PC-3 (cell line): ENCODE measurements at regions of chrX and their contacts with region 1.

Region 1: DNA sequence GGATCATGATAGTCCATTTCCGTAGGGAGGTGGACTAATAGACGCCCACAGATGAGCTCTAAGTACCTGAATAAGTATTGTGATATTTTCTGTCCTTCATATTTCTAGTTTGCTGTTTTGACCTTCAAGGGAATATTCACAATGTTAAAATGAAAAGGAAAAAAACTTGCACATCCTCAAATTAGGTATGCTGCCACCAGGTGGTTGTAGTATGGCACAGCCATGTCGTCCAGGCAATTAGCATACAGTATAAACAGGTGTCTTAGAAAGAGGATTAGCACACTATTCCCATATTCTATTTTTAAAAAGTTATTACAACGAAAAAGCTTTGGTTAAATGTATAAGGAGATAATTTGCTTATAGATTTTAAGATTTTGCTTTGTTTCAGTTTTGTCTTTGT is 802.0 kb downstream of the RPA4 start:
- DNase-seq: peak; percentile 62
- ATAC-seq: peak; percentile 57
- H3K4me3 ChIP-seq: no peak overlapping the region
- H3K27ac ChIP-seq: no peak overlapping the region
- H3K4me1 ChIP-seq: no peaks in the 10 kb centered on the region
- H3K27me3 ChIP-seq: no peaks in the 10 kb centered on the region
- CTCF ChIP-seq: peak; percentile 77

Region 2: DNA sequence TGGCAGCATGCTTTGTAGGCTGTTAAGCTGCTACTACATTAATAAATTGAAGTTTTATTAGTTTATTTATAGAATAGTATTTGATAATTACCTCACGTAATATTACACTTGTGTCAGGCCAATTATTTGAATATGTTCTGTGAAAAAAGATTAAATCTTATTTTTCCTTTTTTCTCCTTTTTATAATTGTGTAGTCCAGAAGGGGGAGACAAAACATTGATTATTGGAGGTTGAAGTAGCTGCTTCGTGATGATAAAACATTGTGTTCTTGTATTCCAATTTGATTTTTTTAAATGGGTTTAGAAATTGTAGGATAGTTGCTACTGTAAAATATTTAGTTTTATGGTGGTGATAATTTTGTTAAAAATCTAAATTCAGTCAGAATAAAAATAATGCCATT is 915.4 kb before region 1 on chrX:
- CTCF ChIA-PET with region 1: no interaction called
- POLR2A ChIA-PET with region 1: no interaction called
- intact Hi-C with region 1: loop called (anchors 5 kb)
- DNase-seq: peak; percentile 52
- ATAC-seq: no peak
- H3K4me3 ChIP-seq: no peak overlapping the region
- H3K27ac ChIP-seq: no peak overlapping the region
- H3K4me1 ChIP-seq: no peaks in the 10 kb centered on the region
- H3K27me3 ChIP-seq: no peaks in the 10 kb centered on the region
- CTCF ChIP-seq: peak; percentile 69

Region 3: GRCh38 chrX:97016106-97016505 is 669.6 kb before region 1 on chrX:
- CTCF ChIA-PET with region 1: no interaction called
- POLR2A ChIA-PET with region 1: no interaction called
- intact Hi-C with region 1: loop called (anchors 5 kb)
- DNase-seq: no peak
- ATAC-seq: no peak
- H3K4me3 ChIP-seq: no peak overlapping the region
- H3K27ac ChIP-seq: no peak overlapping the region
- H3K4me1 ChIP-seq: no peaks in the 10 kb centered on the region
- H3K27me3 ChIP-seq: no peaks in the 10 kb centered on the region
- CTCF ChIP-seq: peak; percentile 29; the same call in 1 of the 2 replicates

Region 4: DNA sequence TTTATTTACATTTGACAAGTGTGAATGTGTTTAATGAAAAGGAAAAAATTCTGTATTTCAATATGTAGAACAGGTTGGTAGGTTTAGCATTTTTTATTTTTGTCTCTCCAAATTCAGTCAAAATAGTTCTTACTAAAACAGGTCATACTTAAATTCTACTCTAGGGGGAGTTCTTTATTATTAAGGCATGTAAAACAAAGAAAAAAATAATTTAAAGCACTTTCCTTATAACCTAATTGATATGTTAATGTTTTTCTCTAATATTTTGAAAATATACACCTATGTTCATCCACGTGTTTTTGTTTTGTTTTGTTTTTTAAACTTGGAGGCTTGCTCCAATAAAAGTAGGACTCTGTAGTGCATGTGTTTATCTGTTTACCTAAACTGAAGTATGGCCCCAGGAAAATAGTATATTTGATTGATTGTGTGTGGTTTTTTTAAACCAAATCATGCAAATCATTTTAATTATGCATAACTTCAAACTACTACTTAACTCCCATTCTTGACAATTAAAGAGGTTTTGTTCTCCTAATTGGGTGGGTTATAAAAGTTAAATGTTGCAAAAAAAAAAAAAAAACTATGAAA is 239.4 kb before region 1 on chrX:
- CTCF ChIA-PET with region 1: no interaction called
- POLR2A ChIA-PET with region 1: no interaction called
- intact Hi-C with region 1: loop called (anchors 2 kb)
- DNase-seq: peak; percentile 38
- ATAC-seq: no peak
- H3K4me3 ChIP-seq: no peak overlapping the region
- H3K27ac ChIP-seq: no peak overlapping the region
- H3K4me1 ChIP-seq: no peaks in the 10 kb centered on the region
- H3K27me3 ChIP-seq: no peaks in the 10 kb centered on the region
- CTCF ChIP-seq: peak; percentile 54